ENCODE measurements at regions of chr11 and their contacts with region 1.

Region 1: DNA sequence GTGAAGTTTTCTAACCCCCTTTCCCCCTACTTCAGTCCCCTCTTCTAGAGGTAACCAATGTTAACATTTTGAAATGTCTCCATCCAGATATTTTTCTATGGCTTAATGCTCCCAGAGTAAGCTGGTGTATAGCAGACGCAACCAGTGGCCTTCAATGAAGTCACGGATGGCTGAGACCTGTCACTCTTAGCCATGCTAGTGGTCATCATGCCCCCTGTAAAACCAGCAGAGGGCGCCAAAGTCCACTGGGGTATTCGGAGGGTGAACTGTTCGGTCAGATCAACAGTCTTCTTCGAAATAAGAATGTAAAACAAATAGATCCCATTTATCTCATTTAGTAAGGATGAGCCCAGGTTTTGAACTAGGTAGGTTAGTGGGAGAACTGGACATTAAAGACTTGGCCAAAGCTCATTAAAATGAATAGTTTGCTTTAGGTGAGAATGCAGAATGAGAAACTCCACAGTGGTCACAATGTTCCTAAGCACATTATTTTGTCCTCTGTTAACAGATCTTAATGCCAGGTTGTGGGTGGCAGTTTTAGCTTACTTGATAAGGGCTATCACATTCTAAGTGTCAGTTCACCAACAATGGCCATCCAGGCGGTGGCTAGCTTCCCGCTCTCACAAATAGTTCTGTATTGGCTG is 8.6 kb upstream of the MMP8 start:
- DNase-seq: no peak
- H3K4me3 ChIP-seq: no peak overlapping the region
- CTCF ChIP-seq: peak; percentile 74

Region 2: DNA sequence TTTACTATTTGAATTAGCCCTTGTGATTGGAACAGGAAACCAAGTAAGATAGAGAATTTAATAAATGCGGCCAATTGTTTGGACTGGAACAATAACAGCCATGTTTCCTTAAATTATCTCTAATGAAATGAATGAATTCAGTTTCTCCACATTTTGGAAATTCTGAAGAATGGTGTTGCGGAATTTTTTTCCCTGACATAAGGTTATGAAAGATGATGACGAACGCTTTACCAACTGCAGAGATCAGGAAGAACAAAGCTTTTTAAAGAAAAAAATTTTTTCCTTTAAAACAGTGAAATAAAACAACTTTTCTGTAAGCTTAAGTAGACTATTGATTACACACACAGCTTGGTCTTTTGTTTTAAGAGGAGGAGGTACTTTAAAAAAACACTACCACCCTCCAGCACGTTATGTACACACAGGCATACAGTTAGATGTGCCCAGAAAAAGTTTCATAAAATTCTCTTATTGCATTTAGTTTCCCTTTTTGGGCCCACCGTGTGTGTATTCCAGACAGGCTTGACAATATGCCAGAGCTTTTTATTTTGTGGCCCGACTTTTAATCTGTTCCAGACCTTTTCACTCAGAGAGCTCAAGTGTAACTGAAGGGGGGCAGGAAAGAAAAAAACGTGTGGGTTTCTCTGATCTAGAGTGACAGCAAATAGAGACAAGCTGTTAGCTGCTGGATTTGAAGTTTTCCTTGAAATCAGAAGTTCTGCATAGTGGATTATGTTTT is 545.8 kb before region 1 on chr11:
- CTCF ChIA-PET with region 1: no interaction called
- POLR2A ChIA-PET with region 1: no interaction called
- DNase-seq: no peak
- H3K4me3 ChIP-seq: no peak overlapping the region
- CTCF ChIP-seq: no peak

Region 3: DNA sequence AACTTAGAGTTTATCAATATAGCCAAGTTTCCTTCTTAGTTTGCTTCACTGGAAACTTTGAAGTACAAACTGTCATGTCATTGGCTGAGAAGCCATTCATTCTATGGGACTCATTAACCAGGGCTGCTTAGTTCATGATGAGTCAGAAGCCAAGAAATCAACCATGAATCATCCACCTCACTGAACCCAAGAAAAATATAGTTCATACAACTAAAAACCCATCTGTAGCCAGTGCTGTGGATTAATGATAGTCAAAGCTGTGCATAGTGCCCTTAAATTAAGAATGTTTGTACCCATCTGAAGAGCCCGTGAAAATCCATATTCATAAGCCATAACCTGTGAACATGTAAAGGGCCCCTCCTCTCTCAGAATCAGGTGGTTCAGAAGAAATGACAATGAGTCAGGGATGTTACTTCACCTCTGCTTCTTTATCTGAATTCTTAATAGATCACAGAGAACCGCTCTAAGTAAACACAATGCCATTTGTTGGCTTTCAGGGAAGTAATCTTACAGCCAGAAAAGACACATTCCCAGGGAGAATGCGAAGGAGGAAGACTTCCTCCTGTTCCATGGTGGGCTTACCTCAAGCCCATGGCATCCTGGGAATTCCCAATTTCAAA is 133.6 kb before region 1 on chr11:
- CTCF ChIA-PET with region 1: no interaction called
- POLR2A ChIA-PET with region 1: no interaction called
- DNase-seq: peak; percentile 70
- H3K4me3 ChIP-seq: no peak overlapping the region
- CTCF ChIP-seq: no peak

Region 4: GRCh38 chr11:102705626-102706025 is 27.7 kb before region 1 on chr11 and contains the start of gene MMP27:
- CTCF ChIA-PET with region 1: no interaction called
- POLR2A ChIA-PET with region 1: no interaction called
- DNase-seq: no peak
- H3K4me3 ChIP-seq: no peak within 1 kb of the TSS
- CTCF ChIP-seq: no peak

Region 5: GRCh38 chr11:102757823-102758549 is 24.6 kb after region 1 on chr11:
- CTCF ChIA-PET with region 1: interaction called, 28 read pairs
- POLR2A ChIA-PET with region 1: no interaction called
- DNase-seq: no peak
- H3K4me3 ChIP-seq: no peak overlapping the region
- CTCF ChIP-seq: no peak

Region 6: DNA sequence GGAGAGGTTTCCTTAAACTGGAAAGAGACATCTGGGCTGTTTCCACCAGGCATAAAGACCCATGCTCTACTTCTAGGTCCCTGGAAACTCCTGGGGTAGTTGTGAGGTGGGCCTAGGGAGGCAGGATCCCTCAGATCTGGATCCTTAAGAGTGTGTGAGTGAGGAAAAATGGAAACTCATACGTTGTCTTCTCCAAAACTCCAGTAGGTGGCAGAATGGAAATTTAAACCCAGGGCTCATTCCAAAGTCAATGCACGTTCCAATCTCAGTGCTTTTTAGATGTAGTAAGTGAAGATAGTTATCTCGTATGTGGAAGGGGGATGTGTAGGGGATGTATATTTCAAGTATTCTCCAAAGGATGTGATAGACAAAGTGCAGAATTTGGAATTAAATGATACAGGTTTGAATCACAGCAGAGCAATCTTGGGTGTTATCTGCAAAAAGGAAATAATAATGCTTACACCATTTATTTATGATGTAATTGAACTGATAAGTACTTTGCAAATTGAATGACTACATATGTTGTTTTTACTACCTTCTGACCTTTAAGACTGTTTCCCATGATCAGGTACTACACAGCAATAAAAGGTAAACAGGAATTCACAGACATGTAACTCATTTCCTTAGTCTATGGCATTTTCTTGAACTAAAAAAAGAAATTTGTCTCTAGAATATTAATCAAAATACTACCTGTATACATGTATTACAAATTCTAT is 77.7 kb after region 1 on chr11:
- CTCF ChIA-PET with region 1: interaction called, 14 read pairs
- POLR2A ChIA-PET with region 1: no interaction called
- DNase-seq: no peak
- H3K4me3 ChIP-seq: no peak overlapping the region
- CTCF ChIP-seq: peak; percentile 35

Region 7: DNA sequence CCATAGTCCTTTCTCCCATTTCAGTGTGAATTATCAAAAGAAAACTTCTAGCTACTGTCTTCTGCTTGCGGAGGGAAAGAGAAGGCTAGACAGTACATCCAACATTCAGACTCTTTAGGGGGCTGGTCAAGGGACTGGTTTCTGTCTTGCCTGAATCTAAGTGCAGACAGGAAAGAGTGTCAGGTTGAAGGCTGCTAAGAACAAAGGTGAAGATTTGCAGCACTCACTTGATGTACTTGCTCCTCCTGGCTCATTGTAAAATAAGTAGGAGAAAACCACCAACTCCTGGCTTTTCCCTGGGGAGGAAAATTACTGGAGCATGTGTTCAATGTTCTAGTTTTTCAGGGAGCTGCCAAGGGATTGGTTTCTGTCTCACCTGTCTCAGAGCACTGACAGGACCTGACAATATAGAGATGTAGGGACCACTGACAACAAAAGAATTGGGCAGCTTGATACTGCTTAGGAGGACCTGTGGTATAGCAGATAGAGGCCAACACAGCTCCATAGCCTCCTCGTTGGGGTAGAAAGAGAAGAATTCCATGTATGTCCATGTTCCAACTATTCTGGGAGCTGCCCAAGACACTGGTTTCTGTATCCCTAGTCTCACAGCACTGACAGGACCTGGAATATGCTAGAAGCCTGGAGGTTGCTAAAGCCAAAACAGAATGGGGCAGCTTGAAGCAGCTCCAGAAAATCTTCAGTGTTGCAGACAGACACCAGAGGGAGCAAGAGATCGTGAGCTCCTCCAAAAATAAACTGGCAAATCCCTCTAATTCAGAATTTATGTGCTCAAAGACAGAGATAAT is 181.1 kb after region 1 on chr11:
- CTCF ChIA-PET with region 1: interaction called, 19 read pairs
- POLR2A ChIA-PET with region 1: no interaction called
- DNase-seq: no peak
- H3K4me3 ChIP-seq: no peak overlapping the region
- CTCF ChIP-seq: peak; percentile 68

Region 8: DNA sequence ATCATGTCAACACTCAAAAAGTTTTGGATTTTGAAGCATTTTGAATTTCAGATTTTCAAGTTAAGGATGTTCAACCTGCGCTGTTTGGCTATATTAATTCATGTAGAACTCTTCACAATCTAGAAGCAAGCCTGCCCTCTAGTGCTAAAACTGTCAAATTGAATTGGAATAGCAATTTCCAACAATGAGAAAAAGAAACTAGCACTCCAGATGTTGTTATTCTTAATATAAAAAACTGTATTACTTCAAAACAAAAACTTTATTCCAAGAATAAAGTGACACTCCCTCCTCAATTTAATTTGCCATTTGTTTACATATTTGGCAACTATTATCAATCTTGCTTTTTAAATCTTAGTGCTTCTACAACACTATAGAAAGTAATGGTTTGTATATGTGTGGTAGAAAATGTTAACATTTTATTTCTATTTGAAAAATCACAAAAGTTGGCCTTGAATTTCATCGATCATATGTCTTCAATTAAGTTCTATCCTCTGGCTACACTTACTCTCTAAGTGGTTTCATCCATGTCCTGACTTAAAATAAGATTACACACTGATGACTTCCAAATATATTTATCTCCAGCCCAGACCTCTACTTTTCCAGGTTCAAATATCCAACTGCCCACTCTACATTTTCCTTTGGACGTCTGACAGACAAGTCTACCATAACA is 322.0 kb after region 1 on chr11:
- CTCF ChIA-PET with region 1: interaction called, 12 read pairs
- POLR2A ChIA-PET with region 1: no interaction called
- DNase-seq: no peak
- H3K4me3 ChIP-seq: no peak overlapping the region
- CTCF ChIP-seq: peak; percentile 43

Measured in AG04449 (cell line).